GM12878 (cell line): ENCODE measurements at regions of chr18 and their contacts with region 1.

Region 1: GRCh38 chr18:70019136-70019535 is 71.5 kb upstream of the CD226 start:
- DNase-seq: no peak
- ATAC-seq: no peak
- H3K4me3 ChIP-seq: no peak overlapping the region
- H3K27ac ChIP-seq: no peak overlapping the region
- H3K4me1 ChIP-seq: no peaks in the 10 kb centered on the region
- H3K27me3 ChIP-seq: no peaks in the 10 kb centered on the region
- CTCF ChIP-seq: no peak
- EP300 ChIP-seq: no peak
- POLR2A ChIP-seq: no peak
- RAD21 ChIP-seq: no peak

Region 2: GRCh38 chr18:70005580-70005979 is 13.6 kb before region 1 on chr18:
- CTCF ChIA-PET with region 1: interaction called, 3 read pairs
- POLR2A ChIA-PET with region 1: no interaction called
- RAD21 ChIA-PET with region 1: no interaction called
- SMC1A ChIA-PET with region 1: interaction called, 10 read pairs
- in situ Hi-C with region 1: no loop called
- intact Hi-C with region 1: no loop called
- DNase-seq: no peak
- ATAC-seq: no peak
- H3K4me3 ChIP-seq: no peak overlapping the region
- H3K27ac ChIP-seq: no peak overlapping the region
- H3K4me1 ChIP-seq: no peaks in the 10 kb centered on the region
- H3K27me3 ChIP-seq: no peaks in the 10 kb centered on the region
- CTCF ChIP-seq: no peak
- EP300 ChIP-seq: no peak
- POLR2A ChIP-seq: no peak
- RAD21 ChIP-seq: no peak